Endothelial cell of umbilical vein (primary cell): ENCODE measurements at regions of chr14 and their contacts with region 1.

Region 1: GRCh38 chr14:63229330-63230059 is 25.3 kb downstream of the RHOJ start:
- DNase-seq: peak; percentile 88
- H3K4me3 ChIP-seq: no peak overlapping the region
- H3K27ac ChIP-seq: no peak overlapping the region
- H3K4me1 ChIP-seq: peaks cover 46% of the 10 kb centered on the region
- H3K27me3 ChIP-seq: no peaks in the 10 kb centered on the region
- CTCF ChIP-seq: no peak
- POLR2A ChIP-seq: no peak

Region 2: DNA sequence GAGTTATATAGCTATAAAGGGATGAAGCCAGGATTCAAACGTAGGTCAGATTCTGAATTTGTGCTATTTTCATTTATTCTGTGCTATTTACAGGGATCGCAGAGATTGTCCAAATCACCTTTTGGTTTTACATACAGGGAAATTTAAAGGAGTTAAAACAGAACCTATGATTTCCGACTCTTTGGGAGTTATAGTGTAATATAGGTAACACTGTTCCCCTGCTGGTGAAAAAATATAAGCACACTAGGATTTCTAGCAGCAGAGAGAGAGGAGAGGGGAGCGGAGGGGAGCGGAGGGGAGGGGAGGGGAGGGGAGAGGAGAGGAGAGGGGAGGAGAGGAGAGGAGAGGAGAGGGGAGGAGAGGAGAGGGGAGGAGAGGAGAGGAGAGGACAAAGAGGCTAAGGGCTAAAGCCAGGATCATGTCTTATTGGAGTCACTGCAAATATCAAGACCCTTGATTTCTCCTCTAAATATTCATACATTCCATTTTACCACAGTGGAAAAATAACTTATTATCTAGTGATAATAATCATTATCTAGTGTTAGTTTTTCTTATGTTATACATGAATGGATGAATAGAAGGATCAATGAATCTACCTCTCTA is 138.0 kb before region 1 on chr14:
- CTCF ChIA-PET with region 1: no interaction called
- POLR2A ChIA-PET with region 1: no interaction called
- dilution Hi-C with region 1: no loop called
- intact Hi-C with region 1: no loop called
- DNase-seq: no peak
- H3K4me3 ChIP-seq: no peak overlapping the region
- H3K27ac ChIP-seq: no peak overlapping the region
- H3K4me1 ChIP-seq: no peaks in the 10 kb centered on the region
- H3K27me3 ChIP-seq: no peaks in the 10 kb centered on the region
- CTCF ChIP-seq: no peak
- POLR2A ChIP-seq: no peak

Region 3: DNA sequence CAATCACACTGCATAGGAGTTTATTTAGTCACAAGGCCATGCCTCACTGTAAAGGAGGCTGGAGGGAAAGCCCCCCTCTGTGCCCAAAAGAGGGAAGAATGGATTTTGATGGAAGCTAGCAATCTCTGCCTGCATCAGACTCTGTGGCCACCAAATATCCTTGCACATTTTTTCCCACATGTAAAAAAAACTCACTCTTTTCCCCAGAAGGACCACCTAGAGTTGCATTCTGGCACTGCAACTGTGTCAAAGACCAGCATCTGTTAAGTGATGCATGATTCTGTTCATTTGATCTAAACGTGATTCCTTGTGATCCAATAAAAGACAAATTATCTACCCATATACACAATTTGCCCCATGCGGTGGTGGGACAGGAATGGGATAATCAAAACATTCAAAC is 17.3 kb before region 1 on chr14:
- CTCF ChIA-PET with region 1: interaction called, 7 read pairs
- POLR2A ChIA-PET with region 1: interaction called, 7 read pairs
- dilution Hi-C with region 1: no loop called
- intact Hi-C with region 1: loop called (anchors 2 kb)
- DNase-seq: no peak
- H3K4me3 ChIP-seq: no peak overlapping the region
- H3K27ac ChIP-seq: no peak overlapping the region
- H3K4me1 ChIP-seq: peaks cover 85% of the 10 kb centered on the region
- H3K27me3 ChIP-seq: no peaks in the 10 kb centered on the region
- CTCF ChIP-seq: peak; percentile 14 to 34
- POLR2A ChIP-seq: peak; percentile 33

Region 4: GRCh38 chr14:63248211-63248610 is 18.7 kb after region 1 on chr14:
- CTCF ChIA-PET with region 1: interaction called, 4 read pairs
- POLR2A ChIA-PET with region 1: no interaction called
- dilution Hi-C with region 1: no loop called
- intact Hi-C with region 1: loop called (anchors 2 kb)
- DNase-seq: peak; percentile 84
- H3K4me3 ChIP-seq: no peak overlapping the region
- H3K27ac ChIP-seq: peak overlapping the region; percentile 58
- H3K4me1 ChIP-seq: peaks cover 20% of the 10 kb centered on the region
- H3K27me3 ChIP-seq: no peaks in the 10 kb centered on the region
- CTCF ChIP-seq: no peak
- POLR2A ChIP-seq: no peak

Region 5: DNA sequence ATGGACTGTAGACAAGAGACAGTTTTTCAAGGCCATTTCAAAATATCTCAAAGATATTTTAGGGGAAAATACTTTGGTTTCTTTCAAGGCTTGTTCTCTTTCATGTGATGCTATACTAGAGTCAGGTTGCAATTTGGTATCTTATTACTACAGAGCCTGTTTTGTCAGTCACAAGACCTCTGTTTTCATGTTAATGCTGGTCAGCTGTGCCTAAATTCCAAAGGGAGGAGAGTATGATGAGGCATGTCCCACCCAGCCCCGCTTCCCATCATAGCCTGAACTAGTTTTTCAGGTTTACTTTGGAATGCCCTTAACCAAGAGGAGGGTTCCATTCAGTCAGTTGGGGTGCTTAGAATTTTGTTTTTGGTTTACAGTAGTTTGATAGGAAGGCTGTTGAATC is 36.6 kb after region 1 on chr14:
- CTCF ChIA-PET with region 1: no interaction called
- POLR2A ChIA-PET with region 1: no interaction called
- dilution Hi-C with region 1: no loop called
- intact Hi-C with region 1: no loop called
- DNase-seq: no peak
- H3K4me3 ChIP-seq: no peak overlapping the region
- H3K27ac ChIP-seq: no peak overlapping the region
- H3K4me1 ChIP-seq: no peaks in the 10 kb centered on the region
- H3K27me3 ChIP-seq: no peaks in the 10 kb centered on the region
- CTCF ChIP-seq: no peak
- POLR2A ChIP-seq: no peak